OCI-LY7 (cell line): ENCODE measurements at regions of chr9 and their contacts with region 1.

Region 1: GRCh38 chr9:37415011-37415719 is 7.3 kb upstream of the GRHPR start:
- DNase-seq: peak; percentile 92
- H3K4me3 ChIP-seq: peak overlapping the region; percentile 55
- H3K27ac ChIP-seq: peak overlapping the region; percentile 97
- H3K4me1 ChIP-seq: peaks cover 94% of the 10 kb centered on the region
- CTCF ChIP-seq: peak; percentile 92

Region 2: DNA sequence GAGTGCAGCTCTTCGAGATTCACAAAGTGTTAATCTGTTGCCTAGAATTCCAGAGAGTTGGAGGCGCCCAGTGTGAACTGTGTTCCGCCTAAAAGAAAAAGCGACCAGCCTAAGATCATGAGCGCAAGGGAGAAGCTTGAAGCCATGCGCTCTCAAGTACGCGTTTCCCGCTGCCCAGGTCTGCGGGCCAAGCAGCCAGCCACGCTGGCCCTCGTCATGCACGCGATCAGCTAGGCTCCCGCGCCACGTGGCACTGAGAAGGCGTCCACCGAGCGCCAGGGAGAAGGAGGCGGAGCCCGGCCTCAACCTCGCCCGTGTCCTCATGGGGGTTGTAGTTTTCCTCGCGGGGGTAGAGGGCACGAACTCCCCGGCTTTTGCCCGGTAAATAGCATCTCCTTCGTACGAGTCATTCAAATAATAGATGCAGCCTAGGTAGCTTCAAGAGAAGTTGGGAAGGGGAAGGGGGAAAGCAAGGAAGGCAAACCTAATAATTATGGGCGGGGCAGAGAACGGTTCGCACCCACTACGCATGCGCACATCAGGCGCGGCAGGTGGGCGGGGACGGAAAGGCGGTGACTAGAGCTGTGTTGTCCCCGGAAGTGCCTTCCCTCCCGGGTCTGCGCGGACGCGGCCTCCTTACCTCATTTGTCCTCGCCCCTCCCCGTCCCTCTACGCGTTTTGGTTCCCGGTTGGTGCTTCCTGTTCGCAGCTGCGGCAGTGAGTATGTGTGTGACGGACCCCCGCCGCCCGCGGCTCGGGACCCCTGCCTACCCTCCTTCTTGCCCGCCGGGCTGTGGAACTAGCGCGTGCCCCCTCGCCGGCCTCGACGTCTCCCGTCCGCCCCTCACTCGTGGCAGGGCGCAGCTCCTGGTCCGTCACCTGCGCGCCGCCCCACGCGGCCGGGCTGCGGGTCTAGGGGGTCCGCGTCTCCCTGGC is 295.0 kb before region 1 on chr9 and contains the start of gene ZCCHC7:
- CTCF ChIA-PET with region 1: interaction called, 13 read pairs
- POLR2A ChIA-PET with region 1: no interaction called
- intact Hi-C with region 1: no loop called
- DNase-seq: peak; percentile 96
- H3K4me3 ChIP-seq: peak within 1 kb of the TSS; percentile 96
- H3K27ac ChIP-seq: peak within 1 kb of the TSS; percentile 65
- H3K4me1 ChIP-seq: peaks cover 43% of the 10 kb centered on the region
- CTCF ChIP-seq: no peak
- total RNA-seq, gene ZCCHC7: 108 and 110 TPM in 2 replicates

Region 3: GRCh38 chr9:37329576-37329975 is 85.6 kb before region 1 on chr9:
- CTCF ChIA-PET with region 1: interaction called, 3 read pairs
- POLR2A ChIA-PET with region 1: interaction called, 19 read pairs
- intact Hi-C with region 1: no loop called
- DNase-seq: peak; percentile 88
- H3K4me3 ChIP-seq: peak overlapping the region; percentile 44
- H3K27ac ChIP-seq: peak overlapping the region; percentile 98
- H3K4me1 ChIP-seq: peaks cover 99% of the 10 kb centered on the region
- CTCF ChIP-seq: peak; percentile 96

Region 4: DNA sequence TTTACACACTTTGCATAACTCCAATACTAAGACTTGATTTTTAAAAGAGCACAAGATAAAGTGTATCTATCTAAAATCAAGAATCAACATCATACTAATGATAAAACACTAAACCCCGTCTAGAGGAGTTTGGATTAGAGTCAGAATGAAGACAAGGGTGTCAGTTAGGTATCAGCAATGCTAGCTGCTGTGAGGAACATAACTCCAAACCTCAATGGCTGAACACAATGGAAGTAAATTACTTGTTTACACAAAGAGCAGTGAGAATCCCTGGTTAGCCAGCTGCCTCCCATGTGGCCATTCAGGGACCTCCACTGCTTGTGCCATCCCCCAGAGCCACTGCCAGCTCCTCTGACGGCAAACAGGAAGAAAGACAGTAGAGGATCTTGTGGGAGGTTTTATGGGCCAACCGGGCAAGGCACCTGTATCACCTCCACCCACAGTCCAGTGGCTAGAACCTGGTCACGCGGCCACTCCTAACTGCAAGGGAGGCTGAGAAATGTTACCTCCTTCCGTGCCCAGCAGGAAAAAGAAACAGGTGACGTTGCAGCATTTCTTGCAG is 16.6 kb before region 1 on chr9:
- CTCF ChIA-PET with region 1: interaction called, 6 read pairs
- POLR2A ChIA-PET with region 1: interaction called, 41 read pairs
- intact Hi-C with region 1: no loop called
- DNase-seq: no peak
- H3K4me3 ChIP-seq: peak overlapping the region; percentile 37
- H3K27ac ChIP-seq: peak overlapping the region; percentile 97
- H3K4me1 ChIP-seq: peaks cover 91% of the 10 kb centered on the region
- CTCF ChIP-seq: no peak

Region 5: DNA sequence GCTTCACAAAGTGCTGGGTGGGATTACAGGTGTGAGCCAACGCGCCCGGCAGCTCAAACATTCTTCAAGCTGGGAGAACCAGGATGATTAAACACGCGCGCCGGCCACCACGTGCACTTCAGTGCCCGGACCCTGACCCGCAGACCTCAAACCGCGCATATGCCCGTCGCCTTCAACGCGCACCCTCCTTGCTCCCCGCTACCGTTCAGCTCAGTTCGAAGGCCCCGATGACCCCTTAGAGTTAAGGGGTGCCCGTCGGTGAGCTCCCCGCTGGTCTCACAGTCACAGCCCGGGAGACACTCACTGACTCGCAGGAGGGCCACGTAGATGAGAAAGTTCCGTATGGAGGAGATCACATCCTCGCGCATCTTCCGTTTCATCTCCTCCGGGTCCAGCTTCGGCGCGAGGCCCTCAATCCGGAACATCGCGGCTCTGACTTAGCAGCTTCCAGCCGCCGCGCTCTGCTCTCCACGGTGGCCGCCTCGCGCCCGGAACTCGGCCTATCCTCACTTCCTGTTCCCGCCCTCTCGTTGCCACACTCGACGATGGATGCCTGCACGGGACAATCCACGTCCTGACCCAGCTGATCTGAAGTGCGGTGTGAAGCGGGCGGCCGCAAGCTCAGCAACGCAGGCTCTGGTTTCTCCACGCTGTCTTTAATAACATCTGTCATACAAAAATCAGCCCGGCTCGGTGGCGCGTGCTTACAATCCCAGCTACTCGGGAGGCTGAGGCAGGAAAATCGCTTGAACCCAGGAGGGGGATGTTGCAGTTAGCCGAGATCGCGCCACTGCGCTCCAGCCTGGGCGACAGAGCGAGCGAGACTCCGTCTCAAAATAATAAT is 177.2 kb after region 1 on chr9 and contains the start of gene TOMM5:
- CTCF ChIA-PET with region 1: no interaction called
- POLR2A ChIA-PET with region 1: interaction called, 3 read pairs
- intact Hi-C with region 1: loop called (anchors 5 kb)
- DNase-seq: peak; percentile 89
- H3K4me3 ChIP-seq: peak within 1 kb of the TSS; percentile 78
- H3K27ac ChIP-seq: peak within 1 kb of the TSS; percentile 52
- H3K4me1 ChIP-seq: peaks cover 47% of the 10 kb centered on the region
- CTCF ChIP-seq: no peak
- total RNA-seq, gene TOMM5: 215 and 231 TPM in 2 replicates